ENCODE measurements at regions of chr17 and their contacts with region 1.

Region 1: DNA sequence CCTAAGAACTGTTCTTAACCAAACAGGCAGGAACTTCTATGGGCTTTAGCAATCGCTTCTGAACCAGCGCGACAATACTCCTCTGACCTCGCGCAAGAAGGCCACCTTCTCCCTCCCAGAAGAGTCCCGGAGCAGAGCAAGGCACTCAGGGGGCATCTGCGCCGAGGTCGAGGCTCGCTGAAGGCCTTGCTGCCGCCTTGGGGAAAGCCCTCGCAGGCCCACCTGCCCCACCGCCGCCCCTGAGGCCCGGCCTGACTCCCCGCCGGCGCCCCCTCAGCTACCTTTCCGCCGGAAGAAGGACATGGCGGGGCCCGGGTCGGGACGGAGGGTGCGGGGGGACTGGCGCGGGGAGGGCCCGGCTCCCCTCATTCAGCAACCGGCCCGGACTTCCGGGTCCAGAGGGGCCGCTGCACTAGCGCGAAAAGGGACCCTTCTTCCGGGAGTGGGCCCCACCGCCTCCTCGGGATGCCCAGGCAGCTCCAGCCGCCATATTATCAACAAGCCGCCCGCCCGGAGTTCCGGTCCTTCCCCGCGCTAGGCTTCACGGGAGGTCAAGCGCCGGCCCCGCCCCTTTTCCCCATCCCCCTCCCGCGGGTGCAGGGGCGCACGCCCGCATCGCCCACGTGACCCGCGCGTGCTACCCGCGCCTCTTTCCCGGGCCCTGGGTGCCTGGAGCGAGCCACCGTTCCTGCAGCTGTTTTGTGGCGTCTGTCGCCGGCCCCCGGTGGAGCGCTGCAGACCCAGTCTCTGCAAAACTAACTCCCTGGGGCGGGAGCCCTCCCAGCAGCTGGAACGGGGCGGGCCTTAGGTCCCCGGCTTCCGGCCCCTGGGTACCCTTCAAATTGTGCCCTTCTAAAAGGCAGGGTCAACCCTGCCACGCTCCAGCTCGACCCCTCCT is at the start of gene AKAP10:
- DNase-seq: peak; percentile 78 to 96 (median 86)
- ATAC-seq: peak; percentile 94
- H3K4me3 ChIP-seq: peak within 1 kb of the TSS; percentile 85
- H3K4me3 Mint-ChIP-seq: peak within 1 kb of the TSS; percentile 88 to 98 (median 96)
- H3K27ac ChIP-seq: peak within 1 kb of the TSS; percentile 78
- H3K27ac Mint-ChIP-seq: peak within 1 kb of the TSS; percentile 94 to 98 (median 96)
- H3K4me1 ChIP-seq: peaks cover 8 to 11% of the 10 kb centered on the region in 2 donors
- H3K4me1 Mint-ChIP-seq: peaks cover 28 to 55% (median 52%) of the 10 kb centered on the region in 7 donors
- H3K27me3 ChIP-seq: no peaks in the 10 kb centered on the region
- H3K27me3 Mint-ChIP-seq: no peaks in the 10 kb centered on the region
- total RNA-seq, gene AKAP10: 40.5 to 69.0 (median 51.0) TPM

Region 2: GRCh38 chr17:19377602-19378392 is 599.8 kb before region 1 on chr17:
- CTCF ChIA-PET with region 1: no interaction called
- POLR2A ChIA-PET with region 1: interaction called, 8 read pairs
- intact Hi-C with region 1: loop called in 1 of 2 experiments (anchors 5 kb)
- DNase-seq: peak; percentile 85 to 95 (median 92)
- ATAC-seq: peak; percentile 89
- H3K4me3 ChIP-seq: peak overlapping the region; percentile 99
- H3K4me3 Mint-ChIP-seq: peak overlapping the region; percentile 83 to 100 (median 97)
- H3K27ac ChIP-seq: peak overlapping the region; percentile 81
- H3K27ac Mint-ChIP-seq: peak overlapping the region; percentile 83 to 99 (median 97)
- H3K4me1 ChIP-seq: peaks cover 2 to 6% of the 10 kb centered on the region in 2 donors
- H3K4me1 Mint-ChIP-seq: peaks cover 6 to 29% (median 20%) of the 10 kb centered on the region in 7 donors
- H3K27me3 ChIP-seq: no peaks in the 10 kb centered on the region
- H3K27me3 Mint-ChIP-seq: no peaks in the 10 kb centered on the region

Region 3: GRCh38 chr17:19507775-19508576 is 469.6 kb before region 1 on chr17:
- CTCF ChIA-PET with region 1: no interaction called
- POLR2A ChIA-PET with region 1: no interaction called
- intact Hi-C with region 1: loop called in 1 of 2 experiments (anchors 2 kb)
- DNase-seq: peak; percentile 82 to 96 (median 90)
- ATAC-seq: peak; percentile 85
- H3K4me3 ChIP-seq: peak overlapping the region; percentile 99
- H3K4me3 Mint-ChIP-seq: peak overlapping the region; percentile 87 to 99 (median 91)
- H3K27ac ChIP-seq: peak overlapping the region; percentile 67
- H3K27ac Mint-ChIP-seq: peak overlapping the region; percentile 95 to 99 (median 96)
- H3K4me1 ChIP-seq: peaks cover 0 to 6% of the 10 kb centered on the region in 2 donors
- H3K4me1 Mint-ChIP-seq: peaks cover 8 to 13% (median 11%) of the 10 kb centered on the region in 7 donors
- H3K27me3 ChIP-seq: no peaks in the 10 kb centered on the region
- H3K27me3 Mint-ChIP-seq: peaks cover 0 to 24% (median 0%) of the 10 kb centered on the region in 5 donors

Region 4: DNA sequence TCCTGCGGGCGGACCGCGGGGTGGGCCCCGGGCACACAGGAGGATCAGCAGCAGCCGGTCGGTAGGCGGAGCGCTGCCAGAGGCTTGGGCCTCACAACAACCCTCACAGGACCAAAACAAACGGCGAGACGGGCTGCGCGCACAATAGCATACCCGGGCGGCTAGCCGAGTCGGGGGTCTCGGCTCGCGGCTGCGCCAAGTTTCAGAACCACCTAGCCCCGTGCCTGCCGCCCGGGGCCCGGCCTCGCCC is 110.6 kb before region 1 on chr17:
- CTCF ChIA-PET with region 1: no interaction called
- POLR2A ChIA-PET with region 1: interaction called, 6 read pairs
- intact Hi-C with region 1: loop called in 1 of 2 experiments (anchors 1 kb)
- DNase-seq: peak in 6 of 9 donors; percentile 26 to 51 (median 46)
- ATAC-seq: peak; percentile 58
- H3K4me3 ChIP-seq: peak overlapping the region; percentile 78
- H3K4me3 Mint-ChIP-seq: peak overlapping the region; percentile 77 to 88 (median 84)
- H3K27ac ChIP-seq: peak overlapping the region; percentile 72
- H3K27ac Mint-ChIP-seq: peak overlapping the region; percentile 62 to 82 (median 75)
- H3K4me1 ChIP-seq: peaks cover 4 to 34% of the 10 kb centered on the region in 2 donors
- H3K4me1 Mint-ChIP-seq: peaks cover 9 to 66% (median 45%) of the 10 kb centered on the region in 7 donors
- H3K27me3 ChIP-seq: no peaks in the 10 kb centered on the region
- H3K27me3 Mint-ChIP-seq: no peaks in the 10 kb centered on the region

Region 5: GRCh38 chr17:19955099-19955498 is 22.5 kb before region 1 on chr17:
- CTCF ChIA-PET with region 1: no interaction called
- POLR2A ChIA-PET with region 1: no interaction called
- intact Hi-C with region 1: no loop called
- DNase-seq: peak in 1 of 9 donors; percentile 6
- ATAC-seq: no peak
- H3K4me3 ChIP-seq: no peak overlapping the region
- H3K4me3 Mint-ChIP-seq: peak overlapping the region in 8 of 10 donors; percentile 17 to 63 (median 44)
- H3K27ac ChIP-seq: no peak overlapping the region
- H3K27ac Mint-ChIP-seq: peak overlapping the region in 5 of 9 donors; percentile 14 to 65 (median 21)
- H3K4me1 ChIP-seq: peaks cover 9 to 27% of the 10 kb centered on the region in 2 donors
- H3K4me1 Mint-ChIP-seq: peaks cover 37 to 71% (median 57%) of the 10 kb centered on the region in 7 donors
- H3K27me3 ChIP-seq: no peaks in the 10 kb centered on the region
- H3K27me3 Mint-ChIP-seq: no peaks in the 10 kb centered on the region

Region 6: GRCh38 chr17:20009302-20010098 is 31.9 kb after region 1 on chr17 and contains the start of gene SPECC1:
- CTCF ChIA-PET with region 1: interaction called, 5 read pairs
- POLR2A ChIA-PET with region 1: interaction called, 9 read pairs
- intact Hi-C with region 1: loop called (anchors 1 kb)
- DNase-seq: peak in 8 of 9 donors; percentile 7 to 95 (median 87)
- ATAC-seq: peak; percentile 100
- H3K4me3 ChIP-seq: peak within 1 kb of the TSS; percentile 85
- H3K4me3 Mint-ChIP-seq: peak within 1 kb of the TSS; percentile 86 to 97 (median 90)
- H3K27ac ChIP-seq: no peak within 1 kb of the TSS
- H3K27ac Mint-ChIP-seq: peak within 1 kb of the TSS in 5 of 9 donors; percentile 25 to 58 (median 44)
- H3K4me1 ChIP-seq: no peaks in the 10 kb centered on the region
- H3K4me1 Mint-ChIP-seq: peaks cover 6 to 17% (median 14%) of the 10 kb centered on the region in 7 donors
- H3K27me3 ChIP-seq: peaks cover 0 to 3% of the 10 kb centered on the region in 2 donors
- H3K27me3 Mint-ChIP-seq: peaks cover 60 to 72% (median 69%) of the 10 kb centered on the region in 5 donors
- total RNA-seq, gene SPECC1: 1.2 to 37.5 (median 5.7) TPM